Activated CD4-positive, alpha-beta T cell treated with anti-CD3 and anti-CD28 coated beads, Interleukin-2, amount 10 ng/mL, durations not matched to agents 7 days and 5 days (primary cell): ENCODE measurements at regions of chr17 and their contacts with region 1.

Region 1: DNA sequence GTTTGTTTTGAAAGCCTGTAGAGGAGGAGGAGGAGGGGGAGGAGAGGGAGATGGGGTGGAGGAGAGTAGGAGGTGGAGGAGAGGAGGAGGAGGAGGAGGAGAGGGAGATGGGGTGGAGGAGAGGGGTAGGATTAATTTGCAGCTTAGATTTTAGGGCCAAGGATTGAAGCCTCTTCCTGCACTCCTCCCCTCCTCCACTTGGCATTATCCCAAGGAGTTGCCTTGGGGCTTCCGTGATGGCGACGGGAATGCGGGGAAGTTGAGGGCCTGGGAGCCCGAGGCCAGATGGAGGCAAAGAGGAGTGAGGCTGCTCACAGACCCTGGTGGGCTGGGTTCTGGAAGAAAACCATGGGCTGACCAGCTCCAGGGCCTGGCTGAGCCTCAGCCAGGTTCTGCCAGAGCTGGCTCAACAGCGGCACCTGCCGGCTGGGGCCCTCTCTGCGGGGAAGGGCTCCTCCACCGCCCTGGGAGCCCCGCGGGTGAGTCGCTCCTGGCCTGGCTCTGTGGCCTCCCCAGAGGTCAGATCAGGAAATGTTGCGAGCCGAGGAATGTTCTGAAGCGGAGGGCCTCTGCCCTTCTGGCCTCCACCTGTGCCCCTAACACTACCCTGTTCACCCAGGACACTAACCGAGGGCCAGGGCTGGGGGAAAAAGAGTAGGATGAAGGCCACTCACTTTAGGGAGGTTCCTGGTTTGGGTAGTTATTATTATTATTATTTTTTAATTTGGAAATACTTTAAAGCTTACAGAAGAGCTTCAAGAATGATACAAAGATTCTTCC is 23.9 kb upstream of the FMNL1 start:
- DNase-seq: peak; percentile 88
- H3K4me3 Mint-ChIP-seq: no peak overlapping the region
- H3K27ac Mint-ChIP-seq: peak overlapping the region; percentile 57
- H3K4me1 Mint-ChIP-seq: peaks cover 6% of the 10 kb centered on the region
- H3K27me3 Mint-ChIP-seq: no peaks in the 10 kb centered on the region

Region 2: GRCh38 chr17:45148183-45149036 is 49.3 kb before region 1 on chr17 and contains the start of gene HEXIM1:
- CTCF ChIA-PET with region 1: interaction called, 61 read pairs
- POLR2A ChIA-PET with region 1: interaction called, 7 read pairs
- DNase-seq: peak; percentile 99
- H3K4me3 Mint-ChIP-seq: peak within 1 kb of the TSS; percentile 98
- H3K27ac Mint-ChIP-seq: peak within 1 kb of the TSS; percentile 100
- H3K4me1 Mint-ChIP-seq: peaks cover 56% of the 10 kb centered on the region
- H3K27me3 Mint-ChIP-seq: no peaks in the 10 kb centered on the region
- total RNA-seq, gene HEXIM1: 30.5 TPM

Region 3: DNA sequence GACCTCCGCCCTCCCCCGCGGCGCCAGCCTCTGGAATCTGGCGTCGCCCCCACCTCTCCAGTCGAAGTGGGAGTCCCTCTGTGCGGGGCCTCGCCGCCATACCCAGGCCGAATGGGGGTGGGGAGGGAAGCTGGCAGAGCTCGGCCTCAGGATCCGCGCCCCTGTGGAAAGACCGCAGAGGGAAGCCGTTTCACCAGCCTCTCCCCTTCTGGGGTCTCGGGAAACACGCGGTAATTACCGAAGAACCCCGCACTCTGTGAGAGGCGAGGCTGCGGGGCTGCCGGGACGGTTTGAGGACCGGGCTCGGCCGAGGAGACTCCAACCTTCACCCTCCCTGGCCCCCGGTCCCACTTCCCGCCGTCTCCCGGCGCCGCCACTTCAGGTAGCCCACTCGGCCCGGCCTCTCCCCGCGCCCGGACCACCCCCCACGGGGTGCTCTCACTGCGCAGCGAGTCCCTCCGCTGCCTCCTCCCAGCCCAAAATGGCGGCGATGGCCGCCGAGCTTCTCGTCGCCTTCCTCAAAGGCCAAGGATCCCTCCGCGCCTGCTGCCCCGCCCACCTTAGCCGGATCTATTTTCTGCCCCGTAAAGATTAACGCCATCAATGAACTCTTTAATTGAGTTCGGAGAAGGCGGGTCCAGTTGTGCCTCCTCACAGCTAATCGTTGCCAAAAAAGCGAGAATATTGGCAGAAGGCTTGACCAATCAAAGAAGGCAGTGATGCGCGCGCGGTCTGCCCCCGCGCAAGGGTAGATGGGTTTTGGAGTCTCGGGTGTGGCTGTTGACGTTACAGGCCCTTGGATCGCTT is 36.5 kb before region 1 on chr17:
- CTCF ChIA-PET with region 1: interaction called, 10 read pairs
- POLR2A ChIA-PET with region 1: no interaction called
- DNase-seq: peak; percentile 98
- H3K4me3 Mint-ChIP-seq: peak overlapping the region; percentile 99
- H3K27ac Mint-ChIP-seq: peak overlapping the region; percentile 96
- H3K4me1 Mint-ChIP-seq: peaks cover 41% of the 10 kb centered on the region
- H3K27me3 Mint-ChIP-seq: no peaks in the 10 kb centered on the region

Region 4: DNA sequence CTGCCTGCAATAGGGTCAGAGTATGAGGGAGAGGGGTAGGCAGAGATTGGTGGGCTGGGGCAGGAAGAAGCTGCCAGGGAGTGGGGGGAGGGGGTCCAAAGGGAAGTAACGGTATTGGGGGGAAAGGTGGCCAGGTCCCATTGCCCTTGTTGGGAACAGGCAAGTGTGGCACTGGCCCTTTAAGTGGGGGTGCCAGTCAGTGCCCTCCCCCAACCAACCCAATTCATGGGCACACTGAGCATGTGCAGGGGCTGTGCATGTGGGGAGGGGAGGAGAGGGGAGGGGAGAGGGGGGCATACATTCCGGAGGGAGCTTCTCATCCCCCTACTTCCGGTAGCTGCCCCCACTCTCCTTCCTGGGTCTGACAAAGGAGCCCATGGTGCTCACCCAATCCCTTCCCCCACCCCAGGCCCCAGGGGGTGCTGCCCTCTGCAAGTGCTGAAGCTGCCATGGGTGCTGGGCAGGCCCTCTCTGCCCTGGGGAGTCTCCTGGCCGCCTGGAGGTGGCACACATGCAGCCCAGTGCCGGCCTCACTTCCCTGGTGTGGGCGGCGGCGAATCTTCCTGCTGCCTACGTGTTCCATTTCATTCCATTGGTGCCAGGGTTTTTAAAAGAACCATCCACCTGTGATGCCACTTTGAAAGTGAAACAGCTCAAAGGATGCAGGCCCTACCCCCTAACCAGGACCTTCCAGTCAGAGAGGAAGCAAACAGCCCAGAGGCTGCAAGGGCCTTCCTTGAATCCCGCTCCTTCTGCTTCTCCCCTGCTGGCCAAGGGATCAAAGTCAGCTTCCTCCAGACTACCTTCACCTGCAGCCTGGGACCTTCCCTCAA is 25.1 kb before region 1 on chr17:
- CTCF ChIA-PET with region 1: interaction called, 21 read pairs
- POLR2A ChIA-PET with region 1: no interaction called
- DNase-seq: peak; percentile 66
- H3K4me3 Mint-ChIP-seq: peak overlapping the region; percentile 71
- H3K27ac Mint-ChIP-seq: peak overlapping the region; percentile 98
- H3K4me1 Mint-ChIP-seq: peaks cover 24% of the 10 kb centered on the region
- H3K27me3 Mint-ChIP-seq: no peaks in the 10 kb centered on the region

Region 5: DNA sequence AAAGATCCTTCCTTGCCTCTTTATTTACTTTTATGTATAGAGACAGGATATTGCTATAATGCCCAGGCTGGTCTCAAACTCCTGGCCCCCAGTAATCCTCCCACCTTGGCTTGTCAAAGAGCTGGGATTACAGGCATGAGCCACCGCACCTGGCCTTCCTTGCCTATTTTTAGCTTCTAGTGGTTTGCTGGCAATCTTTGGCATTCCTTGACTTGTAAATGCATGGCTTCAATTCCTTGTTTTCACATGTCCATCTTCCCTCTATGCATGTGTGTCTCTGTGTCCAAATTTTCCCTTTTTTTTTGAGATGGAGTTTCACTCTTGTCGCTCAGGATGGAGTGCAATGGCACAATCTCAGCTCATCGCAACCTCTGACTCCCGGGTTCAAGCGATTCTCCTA is 13.6 kb before region 1 on chr17:
- CTCF ChIA-PET with region 1: interaction called, 10 read pairs
- POLR2A ChIA-PET with region 1: no interaction called
- DNase-seq: no peak
- H3K4me3 Mint-ChIP-seq: no peak overlapping the region
- H3K27ac Mint-ChIP-seq: no peak overlapping the region
- H3K4me1 Mint-ChIP-seq: no peaks in the 10 kb centered on the region
- H3K27me3 Mint-ChIP-seq: no peaks in the 10 kb centered on the region

Region 6: GRCh38 chr17:45241328-45242011 is 43.7 kb after region 1 on chr17:
- CTCF ChIA-PET with region 1: no interaction called
- POLR2A ChIA-PET with region 1: no interaction called
- DNase-seq: no peak
- H3K4me3 Mint-ChIP-seq: no peak overlapping the region
- H3K27ac Mint-ChIP-seq: no peak overlapping the region
- H3K4me1 Mint-ChIP-seq: peaks cover 52% of the 10 kb centered on the region
- H3K27me3 Mint-ChIP-seq: no peaks in the 10 kb centered on the region